ENCODE measurements at regions of chr20 and their contacts with region 1.

Region 1: DNA sequence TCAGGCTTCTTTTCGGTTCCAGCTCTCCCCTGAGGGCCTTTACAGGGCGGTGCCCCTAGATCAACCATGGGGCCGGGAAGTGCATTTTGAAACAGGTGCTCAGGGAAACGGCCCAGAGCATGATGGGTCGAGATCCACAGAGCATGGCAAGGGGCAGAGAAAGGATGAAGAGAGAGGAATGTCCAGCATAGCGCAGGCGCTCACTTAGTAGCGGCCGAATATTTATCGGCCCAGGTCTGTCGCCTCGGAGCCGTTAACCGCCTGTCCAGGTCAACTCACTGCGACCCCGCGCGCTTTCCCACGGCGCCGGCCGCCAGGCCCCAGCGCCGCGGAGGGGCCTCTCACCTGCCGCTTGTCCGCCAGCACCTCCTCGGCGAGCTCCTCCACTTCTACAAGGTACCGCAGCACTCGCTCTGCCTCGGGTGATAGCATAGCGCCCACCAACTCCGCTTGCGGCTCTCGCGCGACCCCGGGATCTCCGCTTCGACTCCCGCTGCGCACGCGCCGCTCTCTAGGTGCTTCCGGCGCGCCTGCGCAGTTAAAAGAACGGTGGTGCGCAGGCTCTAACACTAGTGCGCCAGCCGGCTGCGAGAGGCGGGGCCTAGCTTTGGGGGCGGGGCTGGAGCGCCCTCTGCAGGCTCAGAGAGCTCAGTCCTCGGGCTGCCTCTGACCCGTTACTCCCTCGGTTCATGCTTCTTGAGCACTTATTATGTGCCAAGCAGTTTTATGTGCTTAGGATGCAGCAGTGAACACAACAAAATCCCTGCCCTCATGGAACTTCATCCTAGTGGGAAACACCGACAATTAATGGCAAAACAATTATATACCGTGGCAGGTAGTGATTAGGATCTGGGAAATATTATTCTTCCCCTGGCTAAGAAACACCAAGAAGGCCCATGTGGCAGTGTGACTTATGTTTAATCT is at the start of gene PDRG1:
- DNase-seq: peak; percentile 99
- H3K4me3 Mint-ChIP-seq: peak within 1 kb of the TSS; percentile 98
- H3K27ac Mint-ChIP-seq: peak within 1 kb of the TSS; percentile 95
- H3K4me1 Mint-ChIP-seq: peaks cover 17% of the 10 kb centered on the region
- H3K27me3 Mint-ChIP-seq: peaks cover 8% of the 10 kb centered on the region
- total RNA-seq, gene PDRG1: 18.2 and 19.3 TPM in 2 replicates

Region 2: GRCh38 chr20:31822421-31823330 is 129.1 kb before region 1 on chr20:
- intact Hi-C with region 1: loop called (anchors 2 kb)
- DNase-seq: peak; percentile 92
- H3K4me3 Mint-ChIP-seq: peak overlapping the region; percentile 17
- H3K27ac Mint-ChIP-seq: no peak overlapping the region
- H3K4me1 Mint-ChIP-seq: peaks cover 9% of the 10 kb centered on the region
- H3K27me3 Mint-ChIP-seq: peaks cover 5% of the 10 kb centered on the region

Region 3: GRCh38 chr20:31849455-31849925 is 102.3 kb before region 1 on chr20:
- intact Hi-C with region 1: loop called (anchors 1 kb)
- DNase-seq: no peak
- H3K4me3 Mint-ChIP-seq: no peak overlapping the region
- H3K27ac Mint-ChIP-seq: no peak overlapping the region
- H3K4me1 Mint-ChIP-seq: no peaks in the 10 kb centered on the region
- H3K27me3 Mint-ChIP-seq: peaks cover 12% of the 10 kb centered on the region

Region 4: DNA sequence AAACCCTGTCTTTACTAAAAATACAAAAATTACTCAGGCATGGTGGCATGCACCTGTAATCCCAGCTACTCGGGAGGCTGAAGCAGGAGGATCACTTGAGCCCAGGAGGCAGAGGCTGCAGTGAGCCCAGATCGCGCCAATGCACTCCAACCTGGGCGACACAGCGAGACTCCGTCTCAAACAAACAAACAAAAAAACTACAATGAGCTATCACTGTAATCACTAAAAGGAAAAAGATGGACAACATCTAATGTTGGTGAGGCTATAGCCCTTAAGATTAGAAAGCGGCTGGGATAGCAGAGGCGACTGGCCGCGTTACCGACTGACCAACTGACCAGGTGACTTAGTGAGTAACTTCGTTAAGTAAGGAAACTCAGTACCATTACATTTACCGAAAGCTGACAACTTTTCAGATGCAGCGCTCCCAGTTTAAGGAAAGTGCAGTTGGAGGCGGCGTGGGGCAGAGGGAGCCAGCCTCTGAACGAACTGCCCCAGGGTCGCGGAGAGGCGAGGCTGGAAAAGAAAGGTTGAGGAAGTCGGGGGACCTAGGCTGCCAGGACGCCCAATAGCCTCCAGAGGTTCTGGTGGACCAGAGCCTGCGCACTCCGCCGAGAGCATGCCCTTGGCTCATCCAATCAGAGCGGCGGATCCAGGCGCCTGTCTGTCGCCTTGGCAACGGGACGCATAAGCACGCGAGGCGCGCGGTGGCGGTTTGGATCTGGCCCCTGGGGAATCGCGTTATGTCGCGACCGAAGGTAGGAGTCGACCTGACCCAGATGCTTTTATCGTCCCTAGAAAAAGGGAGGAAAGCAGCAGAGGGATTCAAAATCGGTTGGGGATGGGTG is 72.4 kb before region 1 on chr20:
- intact Hi-C with region 1: loop called (anchors 1 kb)
- DNase-seq: peak; percentile 94
- H3K4me3 Mint-ChIP-seq: peak overlapping the region; percentile 94
- H3K27ac Mint-ChIP-seq: peak overlapping the region; percentile 82
- H3K4me1 Mint-ChIP-seq: peaks cover 14% of the 10 kb centered on the region
- H3K27me3 Mint-ChIP-seq: peaks cover 48% of the 10 kb centered on the region

Region 5: DNA sequence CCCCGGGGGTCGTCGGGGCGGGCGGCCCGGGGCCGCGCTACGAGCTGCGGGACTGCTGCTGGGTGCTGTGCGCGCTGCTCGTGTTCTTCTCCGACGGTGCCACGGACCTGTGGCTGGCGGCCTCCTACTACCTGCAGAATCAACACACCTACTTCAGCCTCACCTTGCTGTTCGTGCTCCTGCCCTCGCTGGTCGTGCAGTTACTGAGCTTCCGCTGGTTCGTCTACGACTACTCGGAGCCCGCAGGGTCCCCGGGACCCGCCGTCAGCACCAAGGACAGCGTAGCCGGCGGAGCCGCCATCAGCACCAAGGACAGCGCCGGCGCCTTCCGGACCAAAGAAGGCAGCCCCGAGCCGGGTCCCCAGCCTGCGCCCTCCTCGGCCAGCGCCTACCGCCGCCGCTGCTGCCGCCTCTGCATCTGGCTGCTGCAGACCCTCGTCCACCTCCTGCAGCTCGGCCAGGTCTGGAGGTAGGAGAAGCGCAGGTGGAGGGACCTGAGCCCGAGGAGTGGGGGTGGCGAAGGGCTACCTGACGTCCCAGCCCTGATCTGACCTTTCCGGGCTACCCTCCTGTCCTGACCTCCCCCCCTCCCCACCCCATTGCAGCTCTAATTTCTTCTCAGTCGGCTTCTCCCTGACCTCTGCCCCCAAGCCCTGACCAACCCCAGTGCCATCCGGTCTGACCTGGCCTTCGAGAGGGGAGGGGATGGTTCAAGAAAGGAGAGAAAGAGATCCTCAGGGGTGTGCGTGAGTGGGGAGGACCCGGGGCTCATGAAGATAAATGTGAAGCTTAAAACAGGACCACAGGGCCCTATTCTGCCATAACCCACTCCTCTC is 16.7 kb after region 1 on chr20:
- intact Hi-C with region 1: loop called (anchors 1 kb)
- DNase-seq: peak; percentile 97
- H3K4me3 Mint-ChIP-seq: peak overlapping the region; percentile 82
- H3K27ac Mint-ChIP-seq: peak overlapping the region; percentile 37
- H3K4me1 Mint-ChIP-seq: peaks cover 6% of the 10 kb centered on the region
- H3K27me3 Mint-ChIP-seq: peaks cover 28% of the 10 kb centered on the region

Region 6: GRCh38 chr20:32018269-32019074 is 66.7 kb after region 1 on chr20:
- intact Hi-C with region 1: loop called (anchors 5 kb)
- DNase-seq: peak; percentile 82
- H3K4me3 Mint-ChIP-seq: peak overlapping the region; percentile 83
- H3K27ac Mint-ChIP-seq: no peak overlapping the region
- H3K4me1 Mint-ChIP-seq: peaks cover 18% of the 10 kb centered on the region
- H3K27me3 Mint-ChIP-seq: peaks cover 71% of the 10 kb centered on the region

Region 7: GRCh38 chr20:32109392-32110172 is 157.8 kb after region 1 on chr20 and contains the start of gene TM9SF4:
- intact Hi-C with region 1: loop called (anchors 10 kb)
- DNase-seq: peak; percentile 97
- H3K4me3 Mint-ChIP-seq: peak within 1 kb of the TSS; percentile 92
- H3K27ac Mint-ChIP-seq: peak within 1 kb of the TSS; percentile 100
- H3K4me1 Mint-ChIP-seq: peaks cover 31% of the 10 kb centered on the region
- H3K27me3 Mint-ChIP-seq: peaks cover 3% of the 10 kb centered on the region
- total RNA-seq, gene TM9SF4: 48.9 and 49.8 TPM in 2 replicates